ENCODE measurements at regions of chr15 and their contacts with region 1.

Region 1: GRCh38 chr15:22786868-22787698 is 639 bp downstream of the NIPA1 start:
- DNase-seq: peak; percentile 19
- H3K4me3 Mint-ChIP-seq: peak overlapping the region; percentile 81
- H3K27ac Mint-ChIP-seq: peak overlapping the region; percentile 71
- H3K4me1 Mint-ChIP-seq: peaks cover 18% of the 10 kb centered on the region
- H3K27me3 Mint-ChIP-seq: no peaks in the 10 kb centered on the region

Region 2: GRCh38 chr15:22735781-22736180 is 51.3 kb before region 1 on chr15:
- CTCF ChIA-PET with region 1: no interaction called
- POLR2A ChIA-PET with region 1: no interaction called
- DNase-seq: no peak
- H3K4me3 Mint-ChIP-seq: no peak overlapping the region
- H3K27ac Mint-ChIP-seq: no peak overlapping the region
- H3K4me1 Mint-ChIP-seq: peaks cover 12% of the 10 kb centered on the region
- H3K27me3 Mint-ChIP-seq: peaks cover 31% of the 10 kb centered on the region

Region 3: DNA sequence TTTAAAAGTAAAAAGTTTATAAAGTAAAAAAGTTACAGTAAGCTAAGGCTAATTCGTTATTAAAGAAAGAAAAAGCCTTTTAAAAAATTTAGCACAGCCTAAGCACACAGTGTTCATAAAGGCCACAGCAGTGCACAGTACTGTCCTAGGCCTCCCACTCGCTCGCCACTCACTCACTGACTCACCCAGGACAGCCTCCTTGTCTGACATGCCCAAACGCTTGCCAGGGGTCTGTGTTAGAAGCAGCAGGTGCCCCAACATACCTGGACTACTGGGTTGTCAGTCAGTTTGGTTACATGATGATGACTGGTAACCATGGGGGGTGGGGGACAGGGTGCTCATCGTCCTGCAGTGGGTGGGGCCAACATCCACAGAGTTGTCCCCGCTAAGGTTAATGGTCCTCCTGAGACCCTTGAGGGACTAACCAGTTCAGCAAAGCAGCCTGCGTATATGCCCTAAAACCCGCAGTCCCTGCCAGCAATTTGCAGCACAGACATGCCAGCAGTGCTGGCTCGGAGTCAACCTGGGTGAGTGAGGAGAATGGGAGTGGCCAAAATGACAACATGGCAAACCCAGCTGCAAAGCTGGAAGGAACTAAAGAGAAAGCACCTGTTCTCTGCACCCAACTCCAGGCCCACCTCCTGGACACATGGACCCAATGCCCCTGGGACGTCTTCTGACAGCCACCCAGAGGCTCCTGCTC is 143.8 kb after region 1 on chr15:
- CTCF ChIA-PET with region 1: no interaction called
- POLR2A ChIA-PET with region 1: interaction called, 12 read pairs
- DNase-seq: no peak
- H3K4me3 Mint-ChIP-seq: no peak overlapping the region
- H3K27ac Mint-ChIP-seq: no peak overlapping the region
- H3K4me1 Mint-ChIP-seq: no peaks in the 10 kb centered on the region
- H3K27me3 Mint-ChIP-seq: no peaks in the 10 kb centered on the region